Natural killer cell (primary cell): ENCODE measurements at regions of chr6 and their contacts with region 1.

Region 1: GRCh38 chr6:39166189-39166911 is 51.4 kb upstream of the SAYSD1 start:
- DNase-seq: peak; percentile 74 to 89
- ATAC-seq: peak; percentile 76 to 94 (median 90)
- H3K4me3 ChIP-seq: no peak overlapping the region
- H3K4me3 Mint-ChIP-seq: no peak overlapping the region
- H3K27ac ChIP-seq: no peak overlapping the region
- H3K27ac Mint-ChIP-seq: no peak overlapping the region
- H3K4me1 ChIP-seq: peaks cover 6% of the 10 kb centered on the region
- H3K4me1 Mint-ChIP-seq: peaks cover 5 to 7% of the 10 kb centered on the region in 2 donors
- H3K27me3 ChIP-seq: no peaks in the 10 kb centered on the region
- H3K27me3 Mint-ChIP-seq: peaks cover 12 to 15% of the 10 kb centered on the region in 2 donors
- CTCF ChIP-seq: peak; percentile 89

Region 2: DNA sequence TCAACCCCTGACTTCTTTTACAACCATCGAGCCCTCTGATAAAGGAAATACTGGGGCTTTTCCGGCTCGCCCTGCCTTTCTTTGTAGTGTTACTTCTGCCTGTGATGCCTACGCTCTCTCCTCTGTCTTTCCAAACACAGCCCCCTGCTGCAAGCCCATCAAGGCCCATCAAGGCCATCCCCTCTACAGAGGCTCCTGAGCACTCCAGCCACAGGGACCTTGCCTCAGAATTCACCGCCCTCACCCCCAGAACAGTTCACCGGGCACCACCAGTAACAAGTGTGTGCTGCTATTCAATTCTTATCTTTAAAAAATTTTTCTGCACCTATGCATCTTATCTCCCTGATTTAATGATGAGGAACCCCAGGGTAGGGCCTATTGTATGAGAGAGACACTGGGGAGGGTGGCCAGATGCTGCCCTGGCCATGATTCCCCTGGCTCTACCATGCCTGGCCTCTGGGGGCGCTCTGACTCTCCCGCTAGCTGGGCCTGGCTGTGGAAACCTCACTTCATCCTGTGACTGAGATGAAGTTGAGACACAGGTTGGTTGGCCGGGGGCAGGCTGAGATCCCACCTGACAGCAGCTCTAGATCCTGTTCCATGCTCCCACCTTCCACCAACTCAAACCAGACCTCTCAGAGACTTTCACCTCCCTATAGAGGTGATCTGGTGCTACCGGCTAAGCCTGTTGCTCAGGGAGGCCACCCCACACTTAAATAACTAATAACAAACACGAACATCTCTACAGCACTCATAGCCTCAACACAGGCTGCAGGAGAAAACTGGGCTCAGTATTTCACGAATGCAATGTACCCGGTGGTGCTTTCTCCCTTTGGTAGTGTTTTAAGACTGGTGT is 137.0 kb before region 1 on chr6:
- intact Hi-C with region 1: loop called (anchors 2 kb)
- DNase-seq: peak; percentile 55
- ATAC-seq: peak; percentile 76 to 99 (median 98)
- H3K4me3 ChIP-seq: no peak overlapping the region
- H3K4me3 Mint-ChIP-seq: no peak overlapping the region
- H3K27ac ChIP-seq: no peak overlapping the region
- H3K27ac Mint-ChIP-seq: no peak overlapping the region
- H3K4me1 ChIP-seq: no peaks in the 10 kb centered on the region
- H3K4me1 Mint-ChIP-seq: peaks cover 6 to 7% of the 10 kb centered on the region in 2 donors
- H3K27me3 ChIP-seq: peaks cover 3% of the 10 kb centered on the region
- H3K27me3 Mint-ChIP-seq: peaks cover 31 to 62% of the 10 kb centered on the region in 2 donors
- CTCF ChIP-seq: peak; percentile 83

Region 3: GRCh38 chr6:39203852-39204375 is 37.6 kb after region 1 on chr6:
- intact Hi-C with region 1: no loop called
- DNase-seq: no peak
- ATAC-seq: no peak
- H3K4me3 ChIP-seq: no peak overlapping the region
- H3K4me3 Mint-ChIP-seq: no peak overlapping the region
- H3K27ac ChIP-seq: no peak overlapping the region
- H3K27ac Mint-ChIP-seq: no peak overlapping the region
- H3K4me1 ChIP-seq: no peaks in the 10 kb centered on the region
- H3K4me1 Mint-ChIP-seq: no peaks in the 10 kb centered on the region
- H3K27me3 ChIP-seq: no peaks in the 10 kb centered on the region
- H3K27me3 Mint-ChIP-seq: no peaks in the 10 kb centered on the region
- CTCF ChIP-seq: no peak

Region 4: DNA sequence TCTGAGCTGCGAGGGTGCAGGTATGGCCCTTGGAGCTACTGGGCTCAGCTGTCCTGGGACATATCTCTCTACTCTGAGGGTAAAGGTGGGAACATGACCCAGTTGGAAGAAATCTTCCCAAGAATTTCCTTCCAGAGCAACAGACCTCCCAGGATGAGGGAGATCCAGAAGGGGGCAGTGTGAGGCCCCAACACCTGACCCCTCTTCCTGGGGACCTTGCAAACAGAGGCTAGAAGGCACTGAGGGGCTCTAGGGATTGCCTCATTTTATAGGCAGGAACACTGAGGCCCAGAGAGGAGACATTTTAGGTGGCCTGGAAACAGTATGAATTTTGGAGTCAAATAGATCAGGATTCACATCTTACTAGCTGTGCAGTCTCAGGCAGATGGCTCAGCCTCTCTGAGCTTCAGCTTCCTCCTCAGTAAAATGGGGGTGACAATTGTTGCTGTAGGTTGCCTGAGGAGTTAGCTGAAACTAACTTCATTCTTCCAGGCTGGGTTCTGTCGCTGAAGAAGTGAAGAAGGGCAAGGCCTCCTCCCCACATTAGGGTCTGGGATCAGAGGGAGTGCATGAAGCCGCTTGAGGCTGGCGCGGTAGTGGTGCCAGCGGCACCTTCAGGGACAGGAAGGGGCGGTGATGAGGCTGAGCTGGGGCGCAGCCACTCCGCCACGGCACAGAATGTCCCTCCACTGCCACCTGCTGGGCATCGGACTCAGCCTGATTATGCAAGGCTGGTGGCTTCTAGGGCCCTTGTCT is 136.5 kb after region 1 on chr6:
- intact Hi-C with region 1: loop called (anchors 1 kb)
- DNase-seq: peak; percentile 82 to 91
- ATAC-seq: peak; percentile 93 to 100 (median 100)
- H3K4me3 ChIP-seq: no peak overlapping the region
- H3K4me3 Mint-ChIP-seq: peak overlapping the region; percentile 57
- H3K27ac ChIP-seq: no peak overlapping the region
- H3K27ac Mint-ChIP-seq: peak overlapping the region in 1 of 2 donors; percentile 60
- H3K4me1 ChIP-seq: peaks cover 6% of the 10 kb centered on the region
- H3K4me1 Mint-ChIP-seq: peaks cover 0 to 11% of the 10 kb centered on the region in 2 donors
- H3K27me3 ChIP-seq: no peaks in the 10 kb centered on the region
- H3K27me3 Mint-ChIP-seq: peaks cover 0 to 2% of the 10 kb centered on the region in 2 donors
- CTCF ChIP-seq: peak; percentile 89

Region 5: GRCh38 chr6:39309942-39310531 is 143.7 kb after region 1 on chr6:
- intact Hi-C with region 1: loop called (anchors 1 kb)
- DNase-seq: peak; percentile 44 to 72
- ATAC-seq: peak; percentile 60 to 84 (median 77)
- H3K4me3 ChIP-seq: no peak overlapping the region
- H3K4me3 Mint-ChIP-seq: no peak overlapping the region
- H3K27ac ChIP-seq: no peak overlapping the region
- H3K27ac Mint-ChIP-seq: no peak overlapping the region
- H3K4me1 ChIP-seq: peaks cover 25% of the 10 kb centered on the region
- H3K4me1 Mint-ChIP-seq: peaks cover 5 to 27% of the 10 kb centered on the region in 2 donors
- H3K27me3 ChIP-seq: peaks cover 18% of the 10 kb centered on the region
- H3K27me3 Mint-ChIP-seq: peaks cover 15 to 38% of the 10 kb centered on the region in 2 donors
- CTCF ChIP-seq: peak; percentile 79